Head of caudate nucleus (tissue), 42 donors: ENCODE measurements at regions of chr1 and their contacts with region 1.

Region 1: GRCh38 chr1:221741711-221742554 is at the start of gene DUSP10:
- DNase-seq: peak; percentile 94 to 100 (median 99)

Region 2: GRCh38 chr1:221543529-221544120 is 198.3 kb before region 1 on chr1:
- intact Hi-C with region 1: loop called (anchors 10 kb)
- DNase-seq: peak in 3 of 42 donors; percentile 10 to 23 (median 12)

Region 3: GRCh38 chr1:222167111-222167510 is 425.2 kb after region 1 on chr1:
- intact Hi-C with region 1: loop called (anchors 10 kb)
- DNase-seq: peak in 34 of 42 donors; percentile 8 to 75 (median 32)